ENCODE measurements at regions of chr2 and their contacts with region 1.

Region 1: DNA sequence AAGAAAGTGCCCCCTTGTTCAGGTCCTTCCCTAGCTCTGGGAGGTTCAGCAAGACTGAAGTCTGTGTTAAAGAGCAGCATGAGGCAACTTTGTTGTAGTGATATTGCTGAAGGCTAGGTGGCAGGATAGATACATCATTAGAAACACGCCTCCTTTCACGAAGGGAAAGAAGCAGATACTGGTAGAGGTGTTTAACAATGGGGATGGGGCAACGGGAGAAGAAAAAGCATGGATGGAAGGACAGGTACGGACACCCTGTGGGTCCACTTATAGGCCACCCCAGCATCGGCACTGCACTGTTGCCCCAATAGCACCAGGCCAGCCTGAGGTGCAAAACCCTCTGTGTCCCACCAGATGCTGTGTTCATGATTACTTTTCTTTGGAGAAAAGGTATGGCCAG is 3.5 kb upstream of the IGFBP5 start:
- DNase-seq: no peak
- H3K4me3 ChIP-seq: no peak overlapping the region
- H3K27ac ChIP-seq: no peak overlapping the region
- H3K4me1 ChIP-seq: peaks cover 3 to 8% (median 6%) of the 10 kb centered on the region in 4 experiments
- H3K27me3 ChIP-seq: peaks cover 0 to 14% (median 12%) of the 10 kb centered on the region in 4 experiments; a peak in 5 of 7 replicates
- CTCF ChIP-seq: peak in 2 of 3 experiments; percentile 83 to 85; a peak in 3 of 4 replicates
- EP300 ChIP-seq: no peak
- POLR2A ChIP-seq: no peak
- RAD21 ChIP-seq: peak; percentile 93 to 94

Region 2: GRCh38 chr2:216257089-216257488 is 441.8 kb before region 1 on chr2:
- CTCF ChIA-PET with region 1: no interaction called
- POLR2A ChIA-PET with region 1: no interaction called
- DNase-seq: no peak
- H3K4me3 ChIP-seq: no peak overlapping the region
- H3K27ac ChIP-seq: no peak overlapping the region
- H3K4me1 ChIP-seq: no peaks in the 10 kb centered on the region
- H3K27me3 ChIP-seq: no peaks in the 10 kb centered on the region; a peak in 1 of 7 replicates
- CTCF ChIP-seq: no peak
- EP300 ChIP-seq: no peak
- POLR2A ChIP-seq: no peak
- RAD21 ChIP-seq: no peak

Region 3: DNA sequence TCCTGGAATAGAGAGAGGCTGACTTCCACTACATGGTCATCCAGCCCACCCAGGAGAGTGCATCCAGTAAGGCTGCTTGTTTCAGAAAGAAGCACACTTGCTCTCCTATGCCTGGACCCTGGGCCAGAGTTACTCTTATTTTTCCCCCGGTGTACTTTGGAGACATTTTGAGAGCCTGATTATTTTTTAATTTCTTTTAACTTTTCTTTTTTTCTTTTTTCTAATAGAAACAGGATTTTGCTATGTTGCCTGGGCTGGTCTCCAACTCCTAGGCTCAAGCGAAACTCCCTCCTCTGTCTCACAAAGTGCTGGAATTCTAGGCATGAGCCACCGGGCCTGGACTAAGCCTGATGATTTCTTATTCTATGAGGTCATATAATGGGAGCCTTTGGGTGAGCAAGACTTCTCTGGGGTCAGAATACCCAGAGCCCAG is 138.0 kb before region 1 on chr2:
- CTCF ChIA-PET with region 1: no interaction called
- POLR2A ChIA-PET with region 1: no interaction called
- DNase-seq: no peak
- H3K4me3 ChIP-seq: no peak overlapping the region
- H3K27ac ChIP-seq: no peak overlapping the region
- H3K4me1 ChIP-seq: peaks cover 7 to 20% (median 11%) of the 10 kb centered on the region in 4 experiments
- H3K27me3 ChIP-seq: no peaks in the 10 kb centered on the region
- CTCF ChIP-seq: no peak
- EP300 ChIP-seq: no peak
- POLR2A ChIP-seq: no peak
- RAD21 ChIP-seq: no peak

Region 4: DNA sequence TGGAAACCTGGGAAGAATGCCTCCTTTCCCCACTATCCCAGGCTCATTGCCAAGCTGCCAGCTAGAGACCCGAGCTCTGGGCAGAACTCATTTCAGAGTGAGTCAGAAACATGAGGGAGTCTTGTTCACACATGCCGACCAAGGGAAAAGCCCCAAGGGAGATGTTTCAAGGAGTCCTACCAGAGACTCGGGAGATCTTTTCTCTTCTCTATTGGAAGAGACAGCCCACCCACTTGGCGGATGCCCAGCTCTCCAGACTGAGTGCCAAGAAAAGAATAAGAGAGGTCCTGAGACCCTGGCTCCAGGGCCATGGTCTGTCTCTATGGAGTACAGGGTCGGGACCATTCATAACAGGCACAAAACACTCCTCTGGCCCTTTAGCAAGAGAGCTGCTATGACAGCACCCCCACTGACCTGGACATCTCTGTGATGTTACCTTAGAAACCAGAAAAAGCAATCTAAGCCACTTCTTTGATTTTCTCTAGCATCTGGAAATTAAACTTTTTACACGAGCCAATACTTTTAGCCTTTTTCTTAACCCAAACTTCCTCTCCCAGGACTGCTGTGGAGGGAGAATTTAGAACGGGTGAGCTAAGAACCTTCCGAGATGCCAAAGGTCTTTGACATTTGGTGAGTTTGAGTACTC is 14.9 kb after region 1 on chr2:
- CTCF ChIA-PET with region 1: interaction called, 17 read pairs
- POLR2A ChIA-PET with region 1: no interaction called
- DNase-seq: no peak
- H3K4me3 ChIP-seq: no peak overlapping the region
- H3K27ac ChIP-seq: no peak overlapping the region
- H3K4me1 ChIP-seq: peaks cover 0 to 2% (median 0%) of the 10 kb centered on the region in 4 experiments; a peak in 1 of 7 replicates
- H3K27me3 ChIP-seq: no peaks in the 10 kb centered on the region
- CTCF ChIP-seq: no peak
- EP300 ChIP-seq: no peak
- POLR2A ChIP-seq: no peak
- RAD21 ChIP-seq: no peak

Region 5: GRCh38 chr2:216740557-216741222 is 41.8 kb after region 1 on chr2:
- CTCF ChIA-PET with region 1: interaction called, 24 read pairs
- POLR2A ChIA-PET with region 1: no interaction called
- DNase-seq: no peak
- H3K4me3 ChIP-seq: no peak overlapping the region
- H3K27ac ChIP-seq: no peak overlapping the region
- H3K4me1 ChIP-seq: peaks cover 0 to 10% (median 1%) of the 10 kb centered on the region in 4 experiments; a peak in 3 of 7 replicates
- H3K27me3 ChIP-seq: no peaks in the 10 kb centered on the region
- CTCF ChIP-seq: no peak
- EP300 ChIP-seq: no peak
- POLR2A ChIP-seq: no peak
- RAD21 ChIP-seq: no peak

Region 6: GRCh38 chr2:217166241-217166850 is 467.5 kb after region 1 on chr2:
- CTCF ChIA-PET with region 1: interaction called, 21 read pairs
- POLR2A ChIA-PET with region 1: no interaction called
- DNase-seq: no peak
- H3K4me3 ChIP-seq: no peak overlapping the region
- H3K27ac ChIP-seq: no peak overlapping the region
- H3K4me1 ChIP-seq: no peaks in the 10 kb centered on the region
- H3K27me3 ChIP-seq: no peaks in the 10 kb centered on the region
- CTCF ChIP-seq: peak in 2 of 3 experiments; percentile 65 to 66; a peak in 3 of 4 replicates
- EP300 ChIP-seq: no peak
- POLR2A ChIP-seq: no peak
- RAD21 ChIP-seq: peak; percentile 80 to 90

Measured in H1 (cell line).